Activated CD4-positive, alpha-beta memory T cell treated with anti-CD3 and anti-CD28 coated beads for 36 hours (primary cell): ENCODE measurements at regions of chr1 and their contacts with region 1.

Region 1: GRCh38 chr1:31715087-31715872 is 11.5 kb upstream of the COL16A1 start:
- DNase-seq: peak; percentile 63
- H3K4me3 Mint-ChIP-seq: peak overlapping the region; percentile 39
- H3K27ac Mint-ChIP-seq: no peak overlapping the region
- H3K4me1 Mint-ChIP-seq: peaks cover 11% of the 10 kb centered on the region
- H3K27me3 Mint-ChIP-seq: peaks cover 41% of the 10 kb centered on the region

Region 2: GRCh38 chr1:31705080-31705866 is 10.0 kb before region 1 on chr1:
- CTCF ChIA-PET with region 1: interaction called, 26 read pairs
- POLR2A ChIA-PET with region 1: interaction called, 3 read pairs
- intact Hi-C with region 1: no loop called
- DNase-seq: peak; percentile 88
- H3K4me3 Mint-ChIP-seq: peak overlapping the region; percentile 17
- H3K27ac Mint-ChIP-seq: no peak overlapping the region
- H3K4me1 Mint-ChIP-seq: peaks cover 37% of the 10 kb centered on the region
- H3K27me3 Mint-ChIP-seq: peaks cover 30% of the 10 kb centered on the region

Region 3: GRCh38 chr1:31734582-31735107 is 19.4 kb after region 1 on chr1:
- CTCF ChIA-PET with region 1: no interaction called
- POLR2A ChIA-PET with region 1: no interaction called
- intact Hi-C with region 1: no loop called
- DNase-seq: no peak
- H3K4me3 Mint-ChIP-seq: no peak overlapping the region
- H3K27ac Mint-ChIP-seq: no peak overlapping the region
- H3K4me1 Mint-ChIP-seq: peaks cover 15% of the 10 kb centered on the region
- H3K27me3 Mint-ChIP-seq: no peaks in the 10 kb centered on the region

Region 4: GRCh38 chr1:31745096-31745945 is 30.0 kb after region 1 on chr1:
- CTCF ChIA-PET with region 1: interaction called, 11 read pairs
- POLR2A ChIA-PET with region 1: no interaction called
- intact Hi-C with region 1: loop called (anchors 5 kb)
- DNase-seq: peak; percentile 76
- H3K4me3 Mint-ChIP-seq: no peak overlapping the region
- H3K27ac Mint-ChIP-seq: no peak overlapping the region
- H3K4me1 Mint-ChIP-seq: peaks cover under 1% of the 10 kb centered on the region
- H3K27me3 Mint-ChIP-seq: peaks cover 1% of the 10 kb centered on the region

Region 5: GRCh38 chr1:31955917-31956736 is 240.8 kb after region 1 on chr1:
- CTCF ChIA-PET with region 1: no interaction called
- POLR2A ChIA-PET with region 1: no interaction called
- intact Hi-C with region 1: no loop called
- DNase-seq: peak; percentile 94
- H3K4me3 Mint-ChIP-seq: peak overlapping the region; percentile 55
- H3K27ac Mint-ChIP-seq: peak overlapping the region; percentile 90
- H3K4me1 Mint-ChIP-seq: peaks cover 59% of the 10 kb centered on the region
- H3K27me3 Mint-ChIP-seq: no peaks in the 10 kb centered on the region